ENCODE measurements at regions of chr20 and their contacts with region 1.

Region 1: GRCh38 chr20:35954200-35954906 is at the start of gene SCAND1:
- DNase-seq: peak; percentile 97
- H3K4me3 Mint-ChIP-seq: peak within 1 kb of the TSS; percentile 97
- H3K27ac Mint-ChIP-seq: peak within 1 kb of the TSS; percentile 96
- H3K4me1 Mint-ChIP-seq: peaks cover 13% of the 10 kb centered on the region
- H3K27me3 Mint-ChIP-seq: no peaks in the 10 kb centered on the region
- CTCF ChIP-seq: peak; percentile 97
- total RNA-seq, gene SCAND1: 54.6 and 63.4 TPM in 2 replicates

Region 2: DNA sequence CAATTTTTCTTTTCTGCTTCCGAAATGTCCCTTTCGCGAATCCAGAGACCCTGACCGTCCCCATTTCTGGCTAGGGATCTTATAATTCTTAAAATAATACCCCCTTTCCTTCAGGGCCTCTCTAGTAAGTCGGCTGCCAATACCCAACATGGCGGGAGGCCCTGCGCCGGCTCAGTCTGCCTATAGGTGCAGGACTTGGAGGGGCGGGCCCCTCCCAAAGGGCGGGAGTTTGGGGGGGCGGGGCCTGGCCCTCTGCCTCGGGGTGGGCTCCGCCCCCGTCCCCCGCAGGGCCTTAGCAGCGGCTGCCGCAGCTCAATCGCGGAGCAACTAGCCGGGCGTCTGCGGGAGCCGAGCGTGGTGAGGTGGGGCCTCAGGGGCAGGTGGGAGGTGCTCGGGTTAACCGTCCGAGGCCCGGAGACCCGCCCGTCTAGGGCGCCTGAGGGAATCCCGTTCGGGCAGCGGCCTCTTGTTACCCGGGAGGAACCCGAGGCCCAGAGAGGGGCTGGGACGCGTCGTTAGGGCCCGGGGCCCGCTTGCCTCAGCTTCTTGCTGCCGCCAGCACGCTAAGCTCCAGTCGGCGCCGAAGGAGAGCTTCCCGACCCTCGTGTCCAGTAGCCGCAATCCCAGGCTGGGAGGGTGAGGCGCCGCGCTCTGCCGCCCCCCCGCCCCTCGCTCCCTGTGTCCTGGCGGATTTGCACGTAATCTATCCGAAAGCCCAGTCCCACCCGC is 499.3 kb before region 1 on chr20 and contains the start of gene CEP250:
- CTCF ChIA-PET with region 1: interaction called, 3 read pairs
- POLR2A ChIA-PET with region 1: interaction called, 24 read pairs
- intact Hi-C with region 1: no loop called
- DNase-seq: peak; percentile 94
- H3K4me3 Mint-ChIP-seq: peak within 1 kb of the TSS; percentile 84
- H3K27ac Mint-ChIP-seq: peak within 1 kb of the TSS; percentile 99
- H3K4me1 Mint-ChIP-seq: peaks cover 24% of the 10 kb centered on the region
- H3K27me3 Mint-ChIP-seq: no peaks in the 10 kb centered on the region
- CTCF ChIP-seq: no peak
- total RNA-seq, gene CEP250: 41.0 and 44.0 TPM in 2 replicates

Region 3: GRCh38 chr20:35741892-35742740 is 212.2 kb before region 1 on chr20 and contains the start of gene RBM39:
- CTCF ChIA-PET with region 1: interaction called, 22 read pairs
- POLR2A ChIA-PET with region 1: interaction called, 125 read pairs
- intact Hi-C with region 1: no loop called
- DNase-seq: peak; percentile 100
- H3K4me3 Mint-ChIP-seq: peak within 1 kb of the TSS; percentile 97
- H3K27ac Mint-ChIP-seq: peak within 1 kb of the TSS; percentile 98
- H3K4me1 Mint-ChIP-seq: peaks cover 23% of the 10 kb centered on the region
- H3K27me3 Mint-ChIP-seq: no peaks in the 10 kb centered on the region
- CTCF ChIP-seq: peak; percentile 14
- total RNA-seq, gene RBM39: 380 and 438 TPM in 2 replicates

Region 4: DNA sequence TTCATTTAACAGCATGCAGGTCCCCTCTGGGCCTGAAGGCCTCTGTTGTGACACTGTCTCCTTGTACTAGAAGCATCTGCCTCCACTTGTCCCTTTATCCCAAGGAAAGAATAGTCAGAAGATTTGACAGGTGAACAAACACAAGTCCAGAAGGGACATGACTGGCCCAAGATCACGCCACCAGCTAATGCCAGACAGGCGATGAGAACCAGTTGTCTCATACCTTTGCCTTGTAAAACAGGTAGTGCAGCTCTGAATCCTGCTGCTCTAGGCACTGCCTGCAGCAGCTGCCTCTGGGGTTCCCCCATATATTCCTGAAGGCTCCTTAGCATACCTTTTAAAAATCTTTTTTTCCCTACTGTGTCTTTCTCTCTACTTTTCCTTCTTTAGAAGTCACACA is 25.1 kb before region 1 on chr20:
- CTCF ChIA-PET with region 1: interaction called, 10 read pairs
- POLR2A ChIA-PET with region 1: interaction called, 5 read pairs
- intact Hi-C with region 1: no loop called
- DNase-seq: no peak
- H3K4me3 Mint-ChIP-seq: no peak overlapping the region
- H3K27ac Mint-ChIP-seq: no peak overlapping the region
- H3K4me1 Mint-ChIP-seq: no peaks in the 10 kb centered on the region
- H3K27me3 Mint-ChIP-seq: no peaks in the 10 kb centered on the region
- CTCF ChIP-seq: no peak

Region 5: GRCh38 chr20:35984382-35984781 is 30.0 kb after region 1 on chr20:
- CTCF ChIA-PET with region 1: interaction called, 37 read pairs
- POLR2A ChIA-PET with region 1: interaction called, 27 read pairs
- intact Hi-C with region 1: no loop called
- DNase-seq: no peak
- H3K4me3 Mint-ChIP-seq: no peak overlapping the region
- H3K27ac Mint-ChIP-seq: no peak overlapping the region
- H3K4me1 Mint-ChIP-seq: peaks cover 6% of the 10 kb centered on the region
- H3K27me3 Mint-ChIP-seq: peaks cover 6% of the 10 kb centered on the region
- CTCF ChIP-seq: no peak

Region 6: GRCh38 chr20:36093025-36093803 is 138.9 kb after region 1 on chr20:
- CTCF ChIA-PET with region 1: interaction called, 6 read pairs
- POLR2A ChIA-PET with region 1: interaction called, 55 read pairs
- intact Hi-C with region 1: no loop called
- DNase-seq: peak; percentile 15
- H3K4me3 Mint-ChIP-seq: peak overlapping the region; percentile 90
- H3K27ac Mint-ChIP-seq: no peak overlapping the region
- H3K4me1 Mint-ChIP-seq: peaks cover 33% of the 10 kb centered on the region
- H3K27me3 Mint-ChIP-seq: no peaks in the 10 kb centered on the region
- CTCF ChIP-seq: no peak